ENCODE measurements at regions of chr10 and their contacts with region 1.

Region 1: DNA sequence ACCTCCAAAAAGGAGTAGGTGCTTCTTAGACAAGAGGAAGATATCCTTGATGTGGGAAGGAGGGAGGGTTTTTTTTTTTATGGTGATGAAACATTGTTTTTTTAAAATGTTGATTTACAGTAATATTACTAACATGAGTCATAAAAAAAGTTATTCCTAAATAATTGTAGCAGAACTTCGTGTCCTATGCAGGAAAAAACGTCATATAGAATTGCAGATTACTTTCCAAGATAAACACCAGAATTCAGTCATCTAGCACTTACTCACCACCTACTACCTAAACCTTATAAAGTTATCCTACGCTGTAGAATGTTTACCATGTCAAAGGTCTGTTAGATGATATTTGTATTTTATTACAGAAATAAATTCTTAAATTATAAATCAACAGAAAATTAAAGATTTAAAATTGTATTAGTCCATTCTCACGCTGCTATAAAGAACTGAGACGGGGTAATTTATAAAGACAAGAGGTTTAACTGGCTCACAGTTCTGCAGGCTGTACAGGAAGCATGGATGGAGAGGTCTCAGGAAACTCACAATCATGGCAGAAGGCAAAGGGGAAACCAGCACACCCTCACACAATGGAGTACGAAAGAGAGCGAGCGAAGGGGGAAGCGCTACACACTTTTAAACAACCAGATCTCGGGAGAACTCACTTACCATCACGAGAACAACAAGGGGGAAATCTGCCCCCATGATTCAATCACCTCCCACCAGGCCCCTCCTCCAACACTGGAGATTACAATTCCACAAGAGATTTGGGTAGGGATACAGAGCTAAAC is 105.2 kb upstream of the NEBL start:
- DNase-seq: peak; percentile 91
- H3K4me3 ChIP-seq: peak overlapping the region in 1 of 3 experiments; percentile 37
- H3K27ac ChIP-seq: peak overlapping the region; percentile 95
- H3K4me1 ChIP-seq: peaks cover 19% of the 10 kb centered on the region
- H3K27me3 ChIP-seq: no peaks in the 10 kb centered on the region
- CTCF ChIP-seq: no peak
- POLR2A ChIP-seq: no peak

Region 2: DNA sequence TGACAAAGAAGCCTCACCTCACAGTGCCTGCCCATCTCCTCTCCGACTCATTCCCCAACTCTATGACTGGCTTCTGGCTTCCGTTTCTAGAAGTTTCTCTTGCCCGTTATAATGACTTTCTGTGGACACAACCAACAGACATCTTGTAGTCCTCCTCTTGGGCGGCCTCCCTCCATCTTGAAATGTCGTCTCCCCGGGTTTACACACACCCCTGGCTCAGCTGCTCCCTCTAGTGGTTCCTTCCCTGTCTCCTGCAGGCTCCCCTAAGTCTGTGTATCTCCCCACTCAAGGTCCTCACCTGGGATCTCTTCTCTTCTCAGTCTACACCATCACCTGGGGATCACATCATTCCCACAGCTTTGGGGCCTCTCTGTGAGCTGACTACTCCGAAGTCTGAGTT is 18.3 kb after region 1 on chr10:
- CTCF ChIA-PET with region 1: no interaction called
- POLR2A ChIA-PET with region 1: no interaction called
- dilution Hi-C with region 1: no loop called
- intact Hi-C with region 1: loop called (anchors 1 kb)
- DNase-seq: peak; percentile 26
- H3K4me3 ChIP-seq: no peak overlapping the region
- H3K27ac ChIP-seq: no peak overlapping the region
- H3K4me1 ChIP-seq: no peaks in the 10 kb centered on the region
- H3K27me3 ChIP-seq: peaks cover 0 to 16% of the 10 kb centered on the region in 2 experiments
- CTCF ChIP-seq: peak; percentile 55 to 63
- POLR2A ChIP-seq: no peak